Posterior cingulate gyrus (tissue), 11 donors: ENCODE measurements at regions of chr1 and their contacts with region 1.

Region 1: GRCh38 chr1:89987170-89987819 is 7.6 kb upstream of the ZNF326 start:
- DNase-seq: peak in 3 of 10 donors; percentile 45 to 60 (median 59)

Region 2: DNA sequence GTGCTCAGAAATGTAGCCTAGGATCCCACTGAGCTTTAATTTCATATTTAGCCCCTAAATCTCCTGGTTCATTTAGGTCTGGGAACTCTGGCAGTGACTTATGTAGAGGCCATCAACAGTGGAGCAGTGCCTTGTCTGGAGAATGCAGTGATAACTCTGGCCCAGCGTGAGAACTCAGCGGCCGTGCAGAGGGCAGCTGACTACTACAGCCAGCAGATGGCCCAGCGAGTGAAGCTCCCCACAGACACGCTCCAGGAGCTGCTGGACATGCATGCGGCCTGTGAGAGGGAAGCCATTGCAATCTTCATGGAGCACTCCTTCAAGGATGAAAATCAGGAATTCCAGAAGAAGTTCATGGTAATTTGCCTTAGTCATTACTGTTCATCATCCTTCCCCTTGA is 605.7 kb before region 1 on chr1:
- intact Hi-C with region 1: no loop called
- DNase-seq: no peak

Region 3: GRCh38 chr1:89780721-89781120 is 206.6 kb before region 1 on chr1:
- intact Hi-C with region 1: loop called (anchors 1 kb)
- DNase-seq: peak in 1 of 10 donors; percentile 41

Region 4: GRCh38 chr1:89804642-89805237 is 182.6 kb before region 1 on chr1:
- intact Hi-C with region 1: loop called (anchors 1 kb)
- DNase-seq: peak; percentile 66 to 97 (median 91)

Region 5: DNA sequence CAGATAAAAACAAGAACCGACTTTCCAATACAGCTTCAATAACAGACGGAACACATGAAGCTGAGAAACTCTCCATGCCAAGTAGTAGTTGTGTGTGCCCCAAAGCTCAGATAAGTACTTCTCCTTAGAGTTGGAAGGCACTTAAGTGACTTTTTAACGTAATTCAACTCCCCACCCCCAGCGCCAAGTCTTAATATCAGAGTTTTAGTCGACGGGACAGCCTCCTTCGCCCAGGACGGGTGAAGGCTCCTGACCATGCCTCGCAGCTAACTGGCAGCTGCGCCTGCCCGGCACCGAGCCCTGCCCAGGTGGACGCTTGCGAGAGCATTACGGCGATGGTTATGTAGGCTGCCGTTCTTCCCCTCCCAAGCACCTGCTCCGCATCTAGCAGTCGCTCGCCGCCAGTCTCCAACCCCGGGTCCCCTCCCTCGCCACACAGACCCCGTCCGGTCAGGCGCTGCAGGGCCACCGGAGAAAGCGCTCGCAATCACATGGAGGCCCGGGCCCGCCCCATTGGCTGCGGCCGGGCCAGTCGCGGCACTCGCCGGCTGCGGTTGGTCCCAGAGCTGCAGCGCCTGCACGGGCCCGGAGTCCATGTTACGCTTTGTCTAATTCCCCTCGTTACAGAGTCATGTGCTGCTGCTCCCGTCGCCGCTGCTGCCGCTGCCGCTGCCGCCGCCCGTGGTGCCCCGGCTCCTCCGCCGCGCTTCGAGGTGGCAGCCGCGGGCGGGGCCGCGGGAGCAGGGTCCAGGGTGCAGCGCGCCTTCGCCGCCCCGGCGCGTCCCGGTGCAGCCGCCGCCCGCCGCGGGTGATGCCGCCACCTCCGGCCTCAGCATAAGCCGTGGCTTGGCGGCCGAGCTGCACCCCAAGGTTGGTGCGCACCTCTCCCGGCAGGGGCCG is 166.6 kb before region 1 on chr1 and contains the start of gene LRRC8D:
- intact Hi-C with region 1: loop called (anchors 5 kb)
- DNase-seq: peak; percentile 85 to 98 (median 92)

Region 6: GRCh38 chr1:89843281-89844121 is 143.8 kb before region 1 on chr1:
- intact Hi-C with region 1: loop called (anchors 5 kb)
- DNase-seq: peak; percentile 56 to 95 (median 72)